ENCODE measurements at regions of chr3 and their contacts with region 1.

Region 1: DNA sequence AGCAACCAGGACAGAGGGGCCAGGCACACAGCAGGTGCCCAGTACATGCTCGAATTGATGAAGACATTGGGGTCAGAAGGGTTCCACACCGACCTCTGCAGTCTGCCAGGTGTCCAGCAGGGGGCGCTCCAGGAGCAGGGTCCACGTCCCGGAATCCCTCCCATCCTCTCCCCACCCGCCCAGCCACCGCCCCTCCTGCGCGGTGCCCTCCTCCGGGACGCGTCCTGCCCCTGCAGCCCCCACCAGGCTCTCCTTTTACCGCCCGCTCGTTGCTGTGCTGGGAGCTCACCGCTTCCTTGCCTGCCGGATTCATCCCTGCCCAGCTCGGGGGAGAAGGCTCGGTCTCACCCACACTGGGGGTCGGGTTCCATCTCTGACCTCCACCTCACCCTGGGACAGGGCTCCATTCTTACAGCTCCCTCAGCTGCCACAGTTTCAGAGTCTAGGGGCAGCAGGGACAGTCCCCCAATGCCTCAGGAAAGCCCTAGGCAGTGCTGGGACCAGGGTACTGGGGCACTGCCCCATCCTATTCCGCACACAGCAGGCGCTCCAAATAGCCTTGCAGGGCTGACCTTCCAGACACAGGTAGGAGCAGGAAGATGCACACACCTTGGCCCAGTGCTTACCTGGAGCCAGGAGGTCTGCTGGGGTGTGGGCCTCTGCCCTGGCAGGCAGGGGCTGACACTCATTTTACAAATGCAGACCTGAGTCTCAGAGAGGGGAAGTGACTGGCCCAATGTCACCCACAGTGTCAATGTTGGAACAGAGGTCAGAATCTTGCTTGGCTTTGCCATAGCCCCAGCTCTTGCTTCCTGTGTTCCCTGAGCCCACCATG is 31.0 kb downstream of the GRIP2 start:
- DNase-seq: no peak
- ATAC-seq: peak; percentile 87
- H3K4me3 ChIP-seq: 0 out of 4 replicates have a peak overlapping the region, but pooled peaks of 1 of the 2 experiments have one; percentile 6
- H3K27ac ChIP-seq: no peak overlapping the region
- H3K4me1 ChIP-seq: no peaks in the 10 kb centered on the region
- H3K27me3 ChIP-seq: no peaks in the 10 kb centered on the region
- CTCF ChIP-seq: peak; percentile 90

Region 2: DNA sequence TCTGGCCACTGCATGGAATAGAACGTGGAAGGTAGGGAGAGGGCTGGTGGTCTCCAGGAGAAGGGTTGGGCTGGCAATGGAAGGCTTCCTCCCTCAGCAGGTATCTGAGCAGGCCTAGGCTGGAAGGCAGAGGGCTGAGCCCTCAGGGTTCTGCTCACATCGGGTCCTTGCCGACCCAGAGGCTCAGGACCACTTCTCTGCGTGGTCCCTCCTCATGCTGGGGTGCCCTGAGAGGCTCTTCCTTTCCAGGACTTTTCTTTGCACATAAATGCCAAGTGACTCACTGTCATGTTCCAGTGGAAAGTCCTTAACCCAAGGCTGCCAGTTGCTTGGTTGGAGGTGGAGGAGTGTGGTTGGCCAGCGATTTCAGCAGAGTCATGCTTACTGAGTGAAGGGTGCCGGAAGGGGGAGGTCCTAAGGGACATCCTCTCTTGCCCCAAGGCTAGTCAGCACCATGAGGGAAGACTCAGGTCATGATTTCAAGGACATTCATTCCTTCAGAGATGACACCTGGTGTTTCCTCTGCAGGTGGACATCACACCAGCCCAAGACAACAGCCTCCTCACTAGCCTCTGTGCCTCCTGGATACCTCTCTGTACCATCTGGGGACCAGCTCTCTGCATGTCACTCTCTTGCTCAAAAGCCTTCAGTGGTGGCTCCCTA is 98.5 kb before region 1 on chr3:
- CTCF ChIA-PET with region 1: no interaction called
- POLR2A ChIA-PET with region 1: no interaction called
- in situ Hi-C with region 1: no loop called
- intact Hi-C with region 1: no loop called
- DNase-seq: peak; percentile 61
- ATAC-seq: peak; percentile 64
- H3K4me3 ChIP-seq: no peak overlapping the region
- H3K27ac ChIP-seq: peak overlapping the region; percentile 61; the same call in 1 of the 2 replicates
- H3K4me1 ChIP-seq: peaks cover 64% of the 10 kb centered on the region
- H3K27me3 ChIP-seq: no peaks in the 10 kb centered on the region
- CTCF ChIP-seq: no peak

Region 3: DNA sequence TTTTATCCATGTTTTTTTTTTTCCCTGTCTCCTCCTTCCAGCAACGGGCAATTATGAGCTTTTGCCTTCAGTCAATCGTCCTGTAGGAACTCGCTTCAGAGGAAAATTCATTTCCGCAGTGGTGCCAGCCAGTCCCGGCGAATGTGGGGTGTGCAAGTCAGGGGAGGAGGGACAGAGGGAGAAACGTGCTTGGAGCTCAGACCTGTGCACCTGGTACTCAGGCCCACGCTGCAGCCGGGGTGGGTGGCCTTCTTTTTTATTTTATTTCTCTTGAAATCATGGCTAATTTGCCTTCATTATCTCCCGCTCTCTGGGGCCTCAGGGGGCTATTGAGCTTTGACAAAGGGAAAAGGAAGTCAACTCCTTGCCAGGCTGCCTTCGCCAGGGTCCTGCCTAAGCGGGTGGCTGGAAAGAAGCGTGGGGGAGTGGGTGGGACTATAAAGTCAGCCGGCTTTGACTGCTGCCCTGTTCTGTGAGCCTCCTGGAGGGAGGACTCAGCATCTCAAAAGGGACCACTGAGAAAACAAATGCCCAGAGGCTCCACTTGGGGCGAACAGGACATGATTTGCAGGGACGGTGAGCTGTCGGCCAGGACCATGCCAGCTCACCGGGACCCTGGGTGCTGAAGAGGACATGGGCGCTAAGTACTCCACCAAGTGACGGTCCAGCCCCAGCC is 25.5 kb after region 1 on chr3:
- CTCF ChIA-PET with region 1: interaction called, 10 read pairs
- POLR2A ChIA-PET with region 1: no interaction called
- in situ Hi-C with region 1: no loop called
- intact Hi-C with region 1: no loop called
- DNase-seq: no peak
- ATAC-seq: no peak
- H3K4me3 ChIP-seq: no peak overlapping the region
- H3K27ac ChIP-seq: no peak overlapping the region
- H3K4me1 ChIP-seq: peaks cover 6% of the 10 kb centered on the region; the same call in 1 of the 2 replicates
- H3K27me3 ChIP-seq: no peaks in the 10 kb centered on the region
- CTCF ChIP-seq: no peak

Region 4: DNA sequence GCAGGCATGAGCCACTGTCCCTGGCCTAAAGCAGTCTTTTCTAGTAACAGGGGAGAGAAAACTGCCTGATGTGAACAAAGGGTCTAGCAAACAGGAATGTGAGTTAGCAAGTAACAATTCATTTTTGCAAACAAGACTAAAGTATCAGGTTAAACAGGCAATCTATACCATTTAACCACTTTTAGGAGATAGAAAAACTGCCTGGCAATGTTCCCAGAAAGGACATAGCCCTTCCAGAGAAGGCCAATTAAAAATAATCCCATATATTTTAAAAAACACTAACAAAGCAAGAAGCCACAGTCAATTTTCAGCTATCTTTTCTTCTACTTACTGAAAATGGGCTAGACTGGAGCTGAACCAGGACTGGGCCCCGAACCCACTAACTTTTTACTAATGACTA is 583.5 kb after region 1 on chr3:
- CTCF ChIA-PET with region 1: no interaction called
- POLR2A ChIA-PET with region 1: no interaction called
- in situ Hi-C with region 1: no loop called
- intact Hi-C with region 1: no loop called
- DNase-seq: no peak
- ATAC-seq: no peak
- H3K4me3 ChIP-seq: no peak overlapping the region
- H3K27ac ChIP-seq: no peak overlapping the region
- H3K4me1 ChIP-seq: no peaks in the 10 kb centered on the region
- H3K27me3 ChIP-seq: no peaks in the 10 kb centered on the region
- CTCF ChIP-seq: no peak

Measured in Panc1 (cell line).